CD4-positive, alpha-beta T cell (primary cell): ENCODE measurements at regions of chr15 and their contacts with region 1.

Region 1: GRCh38 chr15:31483053-31483985 is 156.7 kb downstream of the KLF13 start:
- DNase-seq: peak in 13 of 14 experiments; percentile 25 to 85 (median 48)
- ATAC-seq: peak; percentile 67
- H3K4me3 ChIP-seq: peak overlapping the region; percentile 57
- H3K4me3 Mint-ChIP-seq: peak overlapping the region; percentile 99
- H3K27ac ChIP-seq: no peak overlapping the region
- H3K27ac Mint-ChIP-seq: peak overlapping the region; percentile 94
- H3K4me1 ChIP-seq: peaks cover 48% of the 10 kb centered on the region
- H3K4me1 Mint-ChIP-seq: peaks cover 48% of the 10 kb centered on the region
- H3K27me3 ChIP-seq: no peaks in the 10 kb centered on the region
- H3K27me3 Mint-ChIP-seq: no peaks in the 10 kb centered on the region
- CTCF ChIP-seq: no peak

Region 2: GRCh38 chr15:31391687-31392671 is 91.3 kb before region 1 on chr15:
- CTCF ChIA-PET with region 1: interaction called, 4 read pairs
- POLR2A ChIA-PET with region 1: interaction called, 11 read pairs
- intact Hi-C with region 1: loop called (anchors 2 to 10 kb)
- DNase-seq: peak; percentile 65 to 93 (median 82)
- ATAC-seq: peak; percentile 87
- H3K4me3 ChIP-seq: peak overlapping the region; percentile 75
- H3K4me3 Mint-ChIP-seq: peak overlapping the region; percentile 95
- H3K27ac ChIP-seq: peak overlapping the region; percentile 8 to 37
- H3K27ac Mint-ChIP-seq: peak overlapping the region; percentile 86
- H3K4me1 ChIP-seq: peaks cover 51% of the 10 kb centered on the region
- H3K4me1 Mint-ChIP-seq: peaks cover 52% of the 10 kb centered on the region
- H3K27me3 ChIP-seq: no peaks in the 10 kb centered on the region
- H3K27me3 Mint-ChIP-seq: no peaks in the 10 kb centered on the region
- CTCF ChIP-seq: no peak

Region 3: GRCh38 chr15:31440754-31441311 is 42.5 kb before region 1 on chr15:
- CTCF ChIA-PET with region 1: interaction called, 19 read pairs
- POLR2A ChIA-PET with region 1: interaction called, 105 read pairs
- intact Hi-C with region 1: loop called in 1 of 2 experiments (anchors 2 kb)
- DNase-seq: peak in 9 of 14 experiments; percentile 29 to 69 (median 51)
- ATAC-seq: peak; percentile 45
- H3K4me3 ChIP-seq: peak overlapping the region; percentile 48
- H3K4me3 Mint-ChIP-seq: peak overlapping the region; percentile 75
- H3K27ac ChIP-seq: peak overlapping the region; percentile 25 to 47
- H3K27ac Mint-ChIP-seq: peak overlapping the region; percentile 98
- H3K4me1 ChIP-seq: peaks cover 68% of the 10 kb centered on the region
- H3K4me1 Mint-ChIP-seq: peaks cover 61% of the 10 kb centered on the region
- H3K27me3 ChIP-seq: no peaks in the 10 kb centered on the region
- H3K27me3 Mint-ChIP-seq: no peaks in the 10 kb centered on the region
- CTCF ChIP-seq: no peak

Region 4: DNA sequence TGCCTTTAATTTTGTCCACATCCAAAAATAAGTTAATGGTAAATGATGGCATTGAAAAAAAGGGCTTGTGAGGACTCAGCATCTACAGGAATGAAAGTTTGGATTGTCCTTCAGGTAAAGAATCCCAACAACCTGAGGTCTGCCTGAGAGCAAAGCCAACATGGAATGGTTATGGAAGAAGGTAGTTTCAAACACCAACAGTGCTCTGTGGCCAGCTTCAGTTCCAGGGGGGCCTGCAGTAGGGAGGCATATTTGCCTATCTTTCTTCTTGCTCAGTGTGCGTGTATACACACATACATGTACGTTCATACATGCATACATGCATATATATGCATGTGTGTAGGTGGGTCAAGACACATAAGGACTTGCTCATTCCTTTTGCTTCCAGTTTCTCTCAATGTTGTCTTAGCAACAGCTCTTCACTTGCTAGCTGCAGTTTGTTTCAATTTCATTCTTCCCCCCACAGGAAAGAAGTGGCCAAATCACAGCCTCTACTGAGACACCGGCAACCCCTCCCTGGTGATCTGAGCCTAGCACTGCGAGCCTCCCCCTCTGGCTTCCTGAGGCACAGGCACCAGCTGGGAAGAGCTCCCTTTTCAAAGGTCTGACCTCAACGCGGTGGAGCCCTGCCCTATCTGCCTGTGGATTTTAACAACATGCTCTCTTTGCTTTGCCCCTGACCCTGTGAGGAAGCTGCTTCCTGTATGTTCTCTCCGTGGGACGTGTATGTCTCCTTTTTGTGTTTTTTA is 10.5 kb before region 1 on chr15:
- CTCF ChIA-PET with region 1: interaction called, 7 read pairs
- POLR2A ChIA-PET with region 1: interaction called, 62 read pairs
- intact Hi-C with region 1: no loop called
- DNase-seq: peak in 13 of 14 experiments; percentile 28 to 86 (median 43)
- ATAC-seq: peak; percentile 91
- H3K4me3 ChIP-seq: peak overlapping the region; percentile 46
- H3K4me3 Mint-ChIP-seq: peak overlapping the region; percentile 67
- H3K27ac ChIP-seq: peak overlapping the region; percentile 55 to 69
- H3K27ac Mint-ChIP-seq: peak overlapping the region; percentile 83
- H3K4me1 ChIP-seq: peaks cover 57% of the 10 kb centered on the region
- H3K4me1 Mint-ChIP-seq: peaks cover 45% of the 10 kb centered on the region
- H3K27me3 ChIP-seq: no peaks in the 10 kb centered on the region
- H3K27me3 Mint-ChIP-seq: no peaks in the 10 kb centered on the region
- CTCF ChIP-seq: no peak

Region 5: GRCh38 chr15:31768055-31768454 is 284.7 kb after region 1 on chr15:
- CTCF ChIA-PET with region 1: no interaction called
- POLR2A ChIA-PET with region 1: no interaction called
- intact Hi-C with region 1: no loop called
- DNase-seq: no peak
- ATAC-seq: no peak
- H3K4me3 ChIP-seq: no peak overlapping the region
- H3K4me3 Mint-ChIP-seq: no peak overlapping the region
- H3K27ac ChIP-seq: no peak overlapping the region
- H3K27ac Mint-ChIP-seq: no peak overlapping the region
- H3K4me1 ChIP-seq: no peaks in the 10 kb centered on the region
- H3K4me1 Mint-ChIP-seq: no peaks in the 10 kb centered on the region
- H3K27me3 ChIP-seq: peaks cover 4% of the 10 kb centered on the region in 2 experiments
- H3K27me3 Mint-ChIP-seq: peaks cover 15% of the 10 kb centered on the region
- CTCF ChIP-seq: no peak

Region 6: DNA sequence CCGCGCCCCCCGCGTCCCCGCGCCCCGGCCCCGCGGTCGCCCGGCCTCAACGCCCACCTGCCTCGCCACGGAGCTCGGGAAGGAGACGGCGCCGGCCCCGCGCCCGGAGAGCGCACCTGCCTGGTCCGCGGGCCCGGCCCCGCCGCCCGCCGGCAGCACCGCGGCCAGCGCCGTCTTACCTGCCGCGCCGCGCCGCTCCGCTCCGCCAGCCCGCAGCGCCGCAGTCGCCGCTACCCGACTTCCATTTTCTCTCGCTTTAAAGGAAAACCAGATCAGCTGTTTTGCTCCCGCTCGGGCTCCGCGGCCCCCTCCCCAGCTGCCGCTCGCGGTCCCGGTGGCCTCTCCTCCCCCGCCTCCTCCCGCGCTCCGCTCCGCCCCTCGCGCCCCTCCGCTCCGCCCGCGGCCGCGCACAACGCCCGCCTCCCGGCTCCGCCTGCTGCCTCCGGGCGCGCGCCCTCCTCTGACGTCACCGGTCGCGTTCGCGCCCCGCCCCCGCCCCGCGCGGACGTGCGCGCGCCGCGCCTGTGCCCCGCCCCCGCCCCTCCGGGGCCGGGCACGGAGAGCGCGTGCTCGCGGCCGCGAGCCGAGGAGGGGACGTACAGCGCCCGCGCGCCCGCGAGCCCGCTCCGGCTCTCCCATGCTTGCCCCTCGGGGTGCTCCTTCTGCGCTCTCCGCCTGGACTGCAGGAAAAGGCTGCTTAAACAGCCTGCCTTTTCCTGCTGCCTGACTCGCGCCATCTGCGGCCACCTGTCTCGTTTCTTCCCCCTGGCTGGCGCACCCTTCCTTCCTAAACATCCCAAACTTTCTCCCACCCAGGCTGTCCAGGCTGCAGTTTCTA is 387.2 kb after region 1 on chr15:
- CTCF ChIA-PET with region 1: no interaction called
- POLR2A ChIA-PET with region 1: no interaction called
- intact Hi-C with region 1: loop called in 1 of 2 experiments (anchors 5 kb)
- DNase-seq: peak; percentile 69 to 95 (median 82)
- ATAC-seq: peak; percentile 83
- H3K4me3 ChIP-seq: peak within 1 kb of the TSS; percentile 66
- H3K4me3 Mint-ChIP-seq: peak within 1 kb of the TSS; percentile 87
- H3K27ac ChIP-seq: no peak within 1 kb of the TSS
- H3K27ac Mint-ChIP-seq: peak within 1 kb of the TSS; percentile 77
- H3K4me1 ChIP-seq: peaks cover 14% of the 10 kb centered on the region
- H3K4me1 Mint-ChIP-seq: peaks cover 23% of the 10 kb centered on the region
- H3K27me3 ChIP-seq: peaks cover 0 to 8% of the 10 kb centered on the region in 2 experiments
- H3K27me3 Mint-ChIP-seq: no peaks in the 10 kb centered on the region
- CTCF ChIP-seq: no peak